ENCODE measurements at regions of chr1 and their contacts with region 1.

Region 1: DNA sequence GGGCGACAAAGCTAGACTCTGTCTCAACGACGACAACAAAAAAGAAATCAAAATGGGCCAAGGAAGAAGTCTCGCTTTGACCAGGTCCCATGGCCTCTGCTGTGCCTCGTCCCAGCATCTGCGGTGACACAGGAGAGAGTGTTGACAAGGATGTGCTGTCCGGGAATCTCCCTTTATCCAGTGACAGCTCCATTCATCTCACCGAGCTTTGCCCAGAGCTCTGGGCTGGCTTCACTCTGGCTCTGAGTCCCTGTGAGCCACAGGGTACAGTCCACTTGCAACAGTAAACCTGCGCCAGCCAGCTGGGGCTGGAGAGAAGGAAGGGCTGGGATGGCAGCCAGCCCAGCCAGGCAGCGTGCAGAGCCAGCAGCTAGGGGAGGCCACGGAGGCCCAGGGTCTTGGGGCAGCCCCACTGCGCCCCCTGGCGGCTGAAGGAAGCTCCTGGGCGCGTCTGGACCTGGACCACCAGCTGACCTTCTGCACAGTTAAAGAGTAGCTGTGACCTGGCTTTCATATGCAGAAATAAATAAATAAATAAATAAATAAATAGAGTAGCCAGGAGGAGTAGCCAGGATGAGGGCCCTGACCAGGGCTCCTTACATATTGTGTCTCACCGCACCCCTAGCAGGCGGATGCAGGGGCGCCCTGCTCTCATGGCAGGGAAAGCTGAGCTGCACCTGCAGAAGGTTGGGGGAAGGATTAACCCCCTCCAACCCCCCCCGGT is 29.7 kb downstream of the ENO1 start:
- DNase-seq: peak; percentile 75
- H3K4me3 Mint-ChIP-seq: no peak overlapping the region
- H3K27ac Mint-ChIP-seq: no peak overlapping the region
- H3K4me1 Mint-ChIP-seq: peaks cover 5% of the 10 kb centered on the region
- H3K27me3 Mint-ChIP-seq: peaks cover 6% of the 10 kb centered on the region

Region 2: GRCh38 chr1:8409106-8409505 is 439.7 kb before region 1 on chr1:
- CTCF ChIA-PET with region 1: interaction called, 10 read pairs
- POLR2A ChIA-PET with region 1: no interaction called
- DNase-seq: no peak
- H3K4me3 Mint-ChIP-seq: no peak overlapping the region
- H3K27ac Mint-ChIP-seq: peak overlapping the region; percentile 43
- H3K4me1 Mint-ChIP-seq: peaks cover 61% of the 10 kb centered on the region
- H3K27me3 Mint-ChIP-seq: no peaks in the 10 kb centered on the region

Region 3: GRCh38 chr1:8727809-8728213 is 121.0 kb before region 1 on chr1:
- CTCF ChIA-PET with region 1: interaction called, 54 read pairs
- POLR2A ChIA-PET with region 1: interaction called, 4 read pairs
- DNase-seq: no peak
- H3K4me3 Mint-ChIP-seq: no peak overlapping the region
- H3K27ac Mint-ChIP-seq: no peak overlapping the region
- H3K4me1 Mint-ChIP-seq: peaks cover 21% of the 10 kb centered on the region
- H3K27me3 Mint-ChIP-seq: no peaks in the 10 kb centered on the region

Region 4: GRCh38 chr1:8780405-8780804 is 68.4 kb before region 1 on chr1:
- CTCF ChIA-PET with region 1: interaction called, 13 read pairs
- POLR2A ChIA-PET with region 1: no interaction called
- DNase-seq: no peak
- H3K4me3 Mint-ChIP-seq: no peak overlapping the region
- H3K27ac Mint-ChIP-seq: no peak overlapping the region
- H3K4me1 Mint-ChIP-seq: peaks cover 13% of the 10 kb centered on the region
- H3K27me3 Mint-ChIP-seq: no peaks in the 10 kb centered on the region

Region 5: GRCh38 chr1:8809342-8809736 is 39.5 kb before region 1 on chr1:
- CTCF ChIA-PET with region 1: interaction called, 21 read pairs
- POLR2A ChIA-PET with region 1: no interaction called
- DNase-seq: no peak
- H3K4me3 Mint-ChIP-seq: no peak overlapping the region
- H3K27ac Mint-ChIP-seq: no peak overlapping the region
- H3K4me1 Mint-ChIP-seq: peaks cover 17% of the 10 kb centered on the region
- H3K27me3 Mint-ChIP-seq: no peaks in the 10 kb centered on the region

Region 6: GRCh38 chr1:8831340-8831739 is 17.5 kb before region 1 on chr1:
- CTCF ChIA-PET with region 1: interaction called, 13 read pairs
- POLR2A ChIA-PET with region 1: no interaction called
- DNase-seq: no peak
- H3K4me3 Mint-ChIP-seq: no peak overlapping the region
- H3K27ac Mint-ChIP-seq: no peak overlapping the region
- H3K4me1 Mint-ChIP-seq: peaks cover 9% of the 10 kb centered on the region
- H3K27me3 Mint-ChIP-seq: peaks cover 10% of the 10 kb centered on the region